Cardiac septum (tissue), 1 donor: ENCODE measurements at regions of chr19 and their contacts with region 1.

Region 1: DNA sequence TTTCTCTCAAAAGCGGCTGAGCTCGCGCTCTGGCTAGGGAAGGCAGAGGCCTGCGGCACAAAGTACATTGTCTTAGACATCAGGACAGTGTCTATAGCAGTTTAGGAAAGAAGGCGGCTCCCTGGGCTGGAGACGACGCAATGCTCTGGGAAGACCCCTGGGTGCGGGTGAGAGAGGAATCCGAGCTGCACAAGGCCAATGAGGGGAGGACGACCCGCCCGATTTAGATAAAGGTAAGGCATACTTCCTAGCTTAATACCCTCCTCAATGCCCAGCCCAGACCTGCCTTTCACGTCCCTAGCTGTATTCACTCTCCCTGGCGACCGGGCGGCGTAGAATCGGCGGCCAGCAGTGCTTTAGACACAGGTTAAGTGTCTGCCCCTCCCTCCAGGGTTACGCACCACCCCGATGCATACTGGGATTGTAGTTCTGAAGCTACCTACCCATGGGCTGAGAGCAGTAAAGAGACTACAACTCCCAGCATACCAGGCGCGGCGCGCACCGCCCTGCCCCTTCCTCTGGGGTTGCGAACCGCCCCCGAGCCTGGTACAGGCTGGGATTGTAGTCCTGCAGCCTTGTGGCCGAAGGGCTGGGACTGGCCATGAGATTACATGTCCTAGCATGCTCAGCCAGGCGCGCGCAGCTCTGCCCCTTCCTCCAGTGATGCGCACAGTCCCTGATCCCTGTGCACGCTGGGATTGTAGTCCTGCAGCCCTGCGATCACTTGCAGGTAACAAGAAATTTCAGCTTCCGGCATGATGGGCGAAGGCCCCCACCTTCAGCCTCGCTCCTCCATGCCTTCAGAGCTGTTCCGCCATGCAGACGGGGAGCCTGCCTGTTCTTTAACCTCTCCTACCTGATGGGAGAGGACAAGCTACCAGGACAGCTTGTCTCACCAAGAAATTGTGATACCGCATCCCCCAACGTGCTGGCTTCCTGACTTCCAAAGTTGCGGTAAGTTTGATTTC is 43.4 kb upstream of the ZNF14 start:
- DNase-seq: peak; percentile 99

Region 2: DNA sequence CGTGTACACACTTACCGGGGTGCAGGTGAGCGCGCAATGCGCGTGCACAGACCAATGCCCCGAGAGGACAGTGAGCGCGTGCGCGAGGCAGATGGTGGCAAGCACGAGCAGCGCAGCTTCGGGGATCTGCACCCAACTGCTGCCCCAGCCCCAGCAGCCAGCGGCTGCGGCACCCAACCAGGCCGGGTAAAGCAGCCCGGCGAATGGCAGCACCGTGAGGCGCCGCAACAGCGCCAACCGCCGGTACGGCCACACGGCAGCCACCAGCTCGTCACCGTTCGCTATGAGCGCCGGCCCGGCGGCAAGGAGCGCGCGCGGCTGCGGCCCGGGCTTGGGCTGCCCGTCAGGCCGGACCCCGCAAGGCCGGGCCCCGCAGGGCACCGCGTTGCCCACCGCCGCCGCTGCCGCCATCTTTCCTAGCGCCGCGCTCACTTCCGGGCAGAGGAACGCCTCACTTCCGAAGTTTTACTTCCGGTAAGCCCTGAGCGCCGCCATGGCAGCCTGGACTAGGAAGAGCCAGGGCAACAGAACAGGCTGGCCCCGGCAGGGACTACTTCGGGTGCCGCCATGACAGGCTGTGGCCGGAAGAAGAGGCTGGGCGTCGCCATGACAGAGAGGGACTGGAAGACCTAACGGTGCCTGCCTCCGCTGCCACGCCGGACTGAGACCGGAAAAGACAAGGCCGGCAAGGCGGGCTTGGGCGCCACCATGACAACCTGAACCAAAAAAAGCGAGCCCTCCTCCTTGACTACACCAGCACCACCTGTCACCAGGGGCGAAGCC is 112.9 kb before region 1 on chr19 and contains the start of gene ATP13A1:
- intact Hi-C with region 1: loop called (anchors 5 kb)
- DNase-seq: peak; percentile 98
- total RNA-seq, gene ATP13A1: 20.1 TPM

Region 3: DNA sequence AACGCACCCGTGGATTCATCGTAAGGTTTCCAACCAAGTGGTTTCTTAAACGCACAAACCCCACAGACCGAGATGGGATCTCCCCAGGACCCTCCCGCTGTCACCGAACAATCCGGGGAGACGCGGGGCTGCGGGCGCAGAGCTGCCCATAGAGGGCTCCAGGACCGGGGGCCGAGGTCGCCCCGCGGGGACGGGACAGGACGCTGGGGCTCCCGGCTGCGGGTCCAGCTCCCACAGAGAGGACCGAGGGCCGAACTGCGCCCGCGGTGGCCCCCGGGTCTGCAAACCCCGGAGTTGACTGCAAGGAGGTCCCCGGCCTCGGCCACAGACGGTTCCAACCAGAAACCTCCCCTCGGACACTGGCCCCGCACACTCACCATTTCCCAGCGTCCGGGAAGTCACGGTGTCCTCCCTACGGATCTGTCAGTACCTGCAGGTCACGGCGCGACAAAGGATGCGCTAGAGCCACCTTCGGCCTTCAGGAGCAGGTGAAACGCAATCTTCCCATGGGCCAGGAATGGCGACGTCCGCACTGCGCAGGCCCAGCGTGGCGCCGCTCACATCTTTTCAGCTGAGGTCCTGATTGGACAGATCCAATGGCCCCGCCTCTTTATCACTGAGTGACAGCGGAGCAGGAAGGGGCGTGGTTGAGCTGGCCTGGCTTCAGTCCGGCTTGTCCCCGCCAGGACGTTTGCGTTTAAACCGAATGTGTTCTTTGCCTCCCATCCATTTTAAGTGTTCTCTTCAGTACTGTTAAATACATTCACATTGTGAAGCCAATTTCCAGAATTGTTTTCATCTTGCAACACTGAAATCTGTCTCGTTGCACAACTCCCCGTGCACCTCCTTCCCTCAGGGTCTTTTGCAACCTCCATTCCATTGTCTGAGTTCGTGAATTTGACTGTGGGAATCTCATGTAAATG is 43.5 kb before region 1 on chr19 and contains the start of gene ZNF14:
- intact Hi-C with region 1: loop called (anchors 2 kb)
- DNase-seq: peak; percentile 95
- total RNA-seq, gene ZNF14: 4.6 TPM

Region 4: GRCh38 chr19:19821366-19821951 is 45.1 kb after region 1 on chr19 and contains the start of gene ZNF506:
- intact Hi-C with region 1: loop called (anchors 5 kb)
- DNase-seq: peak; percentile 98
- total RNA-seq, gene ZNF506: 18.2 TPM

Region 5: DNA sequence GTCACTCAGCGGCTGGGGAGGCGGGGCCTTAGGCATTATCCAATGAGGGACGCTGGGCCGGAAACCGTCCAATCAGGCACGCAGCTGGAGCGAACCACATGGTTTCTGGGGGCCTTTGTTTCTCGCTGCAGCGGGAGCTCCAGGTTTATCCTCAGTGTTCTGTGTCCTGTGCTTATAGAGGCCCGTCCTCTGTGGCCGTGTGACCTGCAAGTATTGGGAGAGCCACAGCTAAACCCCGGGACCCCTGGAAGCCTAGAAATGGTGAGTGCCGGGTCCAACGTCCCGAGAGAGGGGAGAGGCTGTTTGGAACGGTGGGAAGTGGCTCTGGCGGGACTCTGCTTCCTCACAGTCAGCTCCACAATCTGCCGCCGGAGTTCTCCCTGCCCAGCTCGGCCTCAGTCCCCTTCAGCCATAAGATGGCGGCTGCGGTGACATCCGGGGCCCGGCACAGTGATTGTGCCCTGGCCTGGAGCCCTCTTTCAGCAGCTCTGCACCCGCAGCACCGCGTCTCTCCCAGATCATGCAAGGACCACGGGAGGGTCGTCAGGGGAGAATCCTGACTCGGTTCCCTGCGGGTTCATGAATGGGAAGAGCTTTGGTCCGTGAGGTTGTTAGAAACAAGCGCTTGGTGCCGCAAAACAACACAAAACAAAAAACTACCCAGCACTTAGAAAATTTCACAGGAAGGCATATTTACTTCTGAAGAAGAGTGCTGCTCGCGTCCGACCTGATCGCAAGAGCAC is 89.6 kb after region 1 on chr19 and contains the start of gene ZNF253:
- intact Hi-C with region 1: loop called (anchors 5 kb)
- DNase-seq: peak; percentile 97
- total RNA-seq, gene ZNF253: 8.9 TPM